Activated CD4-positive, alpha-beta memory T cell treated with anti-CD3 and anti-CD28 coated beads for 36 hours (primary cell): ENCODE measurements at regions of chr10 and their contacts with region 1.

Region 1: GRCh38 chr10:103772096-103772845 is 83.1 kb downstream of the SH3PXD2A start:
- DNase-seq: peak; percentile 75
- H3K4me3 Mint-ChIP-seq: peak overlapping the region; percentile 85
- H3K27ac Mint-ChIP-seq: peak overlapping the region; percentile 89
- H3K4me1 Mint-ChIP-seq: peaks cover 31% of the 10 kb centered on the region
- H3K27me3 Mint-ChIP-seq: no peaks in the 10 kb centered on the region

Region 2: DNA sequence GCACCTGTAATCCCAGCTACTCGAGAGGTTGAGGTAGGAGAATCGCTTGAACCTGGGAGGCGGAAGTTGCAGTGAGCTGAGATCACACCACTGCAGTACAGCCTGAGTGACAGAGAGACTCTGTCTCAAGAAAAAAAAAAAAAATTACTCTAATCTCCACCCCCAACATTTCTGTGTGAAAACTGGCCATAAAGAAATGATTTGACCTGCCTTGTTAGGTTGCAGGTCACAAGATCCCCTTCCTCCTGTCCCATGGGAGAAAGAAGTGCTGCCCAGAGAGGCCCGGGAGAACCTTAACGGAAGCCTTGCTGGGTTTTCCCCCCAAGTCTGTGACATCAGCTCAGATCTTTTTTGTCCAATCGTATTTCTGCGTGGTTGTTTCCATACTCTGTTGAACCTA is 304.9 kb before region 1 on chr10:
- CTCF ChIA-PET with region 1: no interaction called
- POLR2A ChIA-PET with region 1: no interaction called
- intact Hi-C with region 1: no loop called
- DNase-seq: no peak
- H3K4me3 Mint-ChIP-seq: no peak overlapping the region
- H3K27ac Mint-ChIP-seq: peak overlapping the region; percentile 61
- H3K4me1 Mint-ChIP-seq: peaks cover 22% of the 10 kb centered on the region
- H3K27me3 Mint-ChIP-seq: no peaks in the 10 kb centered on the region

Region 3: GRCh38 chr10:103739039-103739764 is 33.1 kb before region 1 on chr10:
- CTCF ChIA-PET with region 1: no interaction called
- POLR2A ChIA-PET with region 1: no interaction called
- intact Hi-C with region 1: no loop called
- DNase-seq: no peak
- H3K4me3 Mint-ChIP-seq: no peak overlapping the region
- H3K27ac Mint-ChIP-seq: no peak overlapping the region
- H3K4me1 Mint-ChIP-seq: peaks cover 2% of the 10 kb centered on the region
- H3K27me3 Mint-ChIP-seq: no peaks in the 10 kb centered on the region

Region 4: GRCh38 chr10:103752680-103753248 is 19.5 kb before region 1 on chr10:
- CTCF ChIA-PET with region 1: interaction called, 20 read pairs
- POLR2A ChIA-PET with region 1: interaction called, 3 read pairs
- intact Hi-C with region 1: no loop called
- DNase-seq: peak; percentile 38
- H3K4me3 Mint-ChIP-seq: no peak overlapping the region
- H3K27ac Mint-ChIP-seq: no peak overlapping the region
- H3K4me1 Mint-ChIP-seq: peaks cover 20% of the 10 kb centered on the region
- H3K27me3 Mint-ChIP-seq: no peaks in the 10 kb centered on the region

Region 5: GRCh38 chr10:103759100-103759781 is 13.0 kb before region 1 on chr10:
- CTCF ChIA-PET with region 1: interaction called, 20 read pairs
- POLR2A ChIA-PET with region 1: interaction called, 5 read pairs
- intact Hi-C with region 1: no loop called
- DNase-seq: peak; percentile 72
- H3K4me3 Mint-ChIP-seq: peak overlapping the region; percentile 38
- H3K27ac Mint-ChIP-seq: peak overlapping the region; percentile 70
- H3K4me1 Mint-ChIP-seq: peaks cover 52% of the 10 kb centered on the region
- H3K27me3 Mint-ChIP-seq: no peaks in the 10 kb centered on the region